IMR-90 (cell line): ENCODE measurements at regions of chr20 and their contacts with region 1.

Region 1: DNA sequence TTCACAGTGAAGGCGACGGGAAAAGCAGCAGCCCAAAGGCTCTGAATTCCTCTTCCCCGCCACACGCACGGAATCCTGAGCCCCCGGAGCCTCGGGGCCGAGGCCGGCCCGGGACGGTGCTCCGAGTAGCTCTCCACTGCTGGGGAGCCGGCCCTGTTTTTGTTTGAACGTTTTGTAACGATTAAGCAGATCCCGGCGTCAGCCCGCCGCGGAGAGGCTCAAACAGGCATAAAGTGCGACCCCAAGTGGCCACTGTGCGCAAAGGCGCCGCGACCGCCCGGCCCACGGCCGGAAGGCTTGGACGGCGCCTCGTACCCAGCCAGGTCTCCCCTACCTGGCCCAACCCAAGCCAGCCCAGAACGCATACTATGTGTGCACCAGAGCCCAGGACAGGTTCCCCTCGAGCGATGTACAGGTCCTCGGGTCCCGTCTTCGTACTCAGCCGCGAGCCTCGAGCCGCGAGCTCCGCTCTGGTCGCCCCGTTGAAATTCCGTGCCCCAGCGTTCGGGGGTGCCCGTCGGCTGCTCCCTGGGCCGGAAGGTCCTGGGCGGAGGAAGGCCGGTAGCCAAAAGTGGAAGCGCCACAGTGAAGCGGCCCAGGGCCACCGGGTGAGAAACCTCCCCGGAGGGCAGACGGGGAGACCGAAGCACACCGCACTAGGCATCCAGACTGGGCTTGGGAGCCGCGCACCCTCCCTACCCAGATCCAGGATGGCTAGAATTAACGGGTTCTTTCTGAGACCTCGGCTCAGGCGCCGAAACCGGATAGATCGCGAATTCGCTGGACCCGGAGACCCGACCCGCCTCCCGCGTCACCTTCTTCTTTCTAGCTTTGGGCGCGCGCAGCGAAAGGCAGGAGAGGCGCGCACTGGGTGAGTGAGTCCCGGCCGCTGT is 1.2 kb upstream of the MAFB start:
- DNase-seq: peak; percentile 79
- ATAC-seq: peak; percentile 63
- H3K4me3 ChIP-seq: peak overlapping the region; percentile 46
- H3K27ac ChIP-seq: peak overlapping the region; percentile 36; the same call in 1 of the 2 replicates
- H3K4me1 ChIP-seq: peaks cover 7% of the 10 kb centered on the region; the same call in 1 of the 2 replicates
- H3K27me3 ChIP-seq: peaks cover 75% of the 10 kb centered on the region
- CTCF ChIP-seq: peak; percentile 83
- POLR2A ChIP-seq: no peak
- RAD21 ChIP-seq: peak; percentile 79

Region 2: GRCh38 chr20:39112178-39112743 is 1577.9 kb before region 1 on chr20:
- CTCF ChIA-PET with region 1: no interaction called
- POLR2A ChIA-PET with region 1: no interaction called
- dilution Hi-C with region 1: no loop called
- in situ Hi-C with region 1: no loop called
- intact Hi-C with region 1: loop called (anchors 10 kb)
- DNase-seq: peak; percentile 28
- ATAC-seq: peak; percentile 96
- H3K4me3 ChIP-seq: no peak overlapping the region
- H3K27ac ChIP-seq: no peak overlapping the region
- H3K4me1 ChIP-seq: no peaks in the 10 kb centered on the region
- H3K27me3 ChIP-seq: peaks cover 8% of the 10 kb centered on the region
- CTCF ChIP-seq: peak; percentile 52
- POLR2A ChIP-seq: no peak
- RAD21 ChIP-seq: peak; percentile 62

Region 3: DNA sequence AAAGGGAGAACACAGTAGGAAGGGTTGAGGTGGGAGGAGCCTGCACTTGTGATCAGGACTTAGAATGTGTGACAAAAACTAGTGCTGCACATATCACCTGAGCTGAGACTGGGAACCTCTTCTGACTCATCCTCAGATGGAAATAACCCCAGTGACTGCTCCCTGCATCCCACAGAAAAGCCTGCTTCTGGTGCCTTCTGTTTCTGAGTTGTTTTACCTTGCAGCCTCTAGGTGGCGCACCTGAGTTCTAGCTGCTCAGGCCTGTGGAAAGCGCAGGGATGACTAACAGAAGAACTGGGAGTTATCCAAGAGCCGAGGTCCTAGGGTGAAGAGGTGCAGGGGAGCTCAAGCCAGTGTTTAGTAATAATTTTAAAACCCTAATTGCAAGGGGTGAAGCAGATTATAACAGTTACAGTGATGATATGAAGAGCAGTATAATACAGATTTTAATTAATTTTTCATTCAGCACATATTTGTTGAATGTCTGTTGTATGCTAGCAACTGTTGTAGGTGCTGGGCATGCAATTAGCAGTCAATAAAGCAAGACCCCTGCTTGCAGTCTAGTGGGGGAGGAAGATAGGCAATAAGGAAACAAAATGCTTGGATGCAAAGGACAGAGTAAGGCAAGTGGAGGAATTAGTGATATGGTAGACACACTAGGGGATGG is 1425.5 kb before region 1 on chr20:
- CTCF ChIA-PET with region 1: interaction called, 4 read pairs
- POLR2A ChIA-PET with region 1: no interaction called
- dilution Hi-C with region 1: no loop called
- in situ Hi-C with region 1: no loop called
- intact Hi-C with region 1: loop called (anchors 1 kb)
- DNase-seq: peak; percentile 71
- ATAC-seq: peak; percentile 80
- H3K4me3 ChIP-seq: no peak overlapping the region
- H3K27ac ChIP-seq: no peak overlapping the region
- H3K4me1 ChIP-seq: no peaks in the 10 kb centered on the region
- H3K27me3 ChIP-seq: no peaks in the 10 kb centered on the region
- CTCF ChIP-seq: peak; percentile 68
- POLR2A ChIP-seq: no peak
- RAD21 ChIP-seq: peak; percentile 43; the same call in 1 of the 2 replicates

Region 4: GRCh38 chr20:39885975-39886649 is 804.1 kb before region 1 on chr20:
- CTCF ChIA-PET with region 1: no interaction called
- POLR2A ChIA-PET with region 1: no interaction called
- dilution Hi-C with region 1: no loop called
- in situ Hi-C with region 1: loop called (anchors 25 kb)
- intact Hi-C with region 1: no loop called
- DNase-seq: peak; percentile 88
- ATAC-seq: peak; percentile 90
- H3K4me3 ChIP-seq: no peak overlapping the region
- H3K27ac ChIP-seq: no peak overlapping the region
- H3K4me1 ChIP-seq: peaks cover 2% of the 10 kb centered on the region; the same call in 1 of the 2 replicates
- H3K27me3 ChIP-seq: peaks cover 1% of the 10 kb centered on the region; the same call in 1 of the 2 replicates
- CTCF ChIP-seq: peak; percentile 64
- POLR2A ChIP-seq: no peak
- RAD21 ChIP-seq: peak; percentile 68

Region 5: GRCh38 chr20:40160097-40160550 is 530.1 kb before region 1 on chr20:
- CTCF ChIA-PET with region 1: no interaction called
- POLR2A ChIA-PET with region 1: no interaction called
- dilution Hi-C with region 1: no loop called
- in situ Hi-C with region 1: no loop called
- intact Hi-C with region 1: loop called (anchors 2 kb)
- DNase-seq: peak; percentile 23
- ATAC-seq: peak; percentile 82
- H3K4me3 ChIP-seq: no peak overlapping the region
- H3K27ac ChIP-seq: no peak overlapping the region
- H3K4me1 ChIP-seq: no peaks in the 10 kb centered on the region
- H3K27me3 ChIP-seq: no peaks in the 10 kb centered on the region
- CTCF ChIP-seq: peak; percentile 49
- POLR2A ChIP-seq: no peak
- RAD21 ChIP-seq: peak; percentile 34; the same call in 1 of the 2 replicates

Region 6: DNA sequence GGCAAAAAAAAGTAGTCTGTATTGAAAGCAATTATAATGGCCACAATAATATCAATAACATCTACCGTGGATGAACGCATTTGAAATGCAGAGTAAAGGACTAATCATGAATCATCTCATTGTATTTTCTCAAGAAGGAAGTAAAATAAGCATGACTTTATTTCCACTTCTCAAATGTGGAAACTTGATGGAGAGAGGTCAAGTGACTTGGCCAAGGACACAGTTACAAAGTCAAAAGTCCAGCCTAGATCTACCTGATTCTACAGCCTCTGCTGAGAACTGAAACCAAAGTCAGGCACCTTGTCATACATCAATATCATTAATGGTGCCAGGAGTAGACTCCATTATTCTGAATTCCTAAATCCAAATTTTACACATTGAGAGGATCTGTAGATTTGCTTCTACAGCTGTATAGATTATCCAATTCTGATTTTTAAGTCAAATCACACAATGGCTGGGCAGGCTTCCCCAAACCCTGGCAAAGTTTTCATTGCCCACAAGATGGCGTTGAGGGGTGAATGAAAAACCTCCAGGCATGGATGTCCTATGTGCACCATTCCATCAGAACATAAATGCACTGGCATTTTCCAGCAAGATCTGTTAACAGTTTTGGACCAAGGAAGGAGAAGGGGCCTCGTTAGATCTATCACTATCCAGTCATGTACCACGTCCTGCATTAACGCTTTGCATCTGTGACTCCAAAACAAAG is 424.2 kb before region 1 on chr20:
- CTCF ChIA-PET with region 1: no interaction called
- POLR2A ChIA-PET with region 1: no interaction called
- dilution Hi-C with region 1: no loop called
- in situ Hi-C with region 1: no loop called
- intact Hi-C with region 1: loop called (anchors 1 kb)
- DNase-seq: no peak
- ATAC-seq: peak; percentile 62
- H3K4me3 ChIP-seq: no peak overlapping the region
- H3K27ac ChIP-seq: no peak overlapping the region
- H3K4me1 ChIP-seq: no peaks in the 10 kb centered on the region
- H3K27me3 ChIP-seq: no peaks in the 10 kb centered on the region
- CTCF ChIP-seq: peak; percentile 15; the same call in 1 of the 2 replicates
- POLR2A ChIP-seq: no peak
- RAD21 ChIP-seq: no peak

Region 7: GRCh38 chr20:40945754-40946450 is 255.7 kb after region 1 on chr20:
- CTCF ChIA-PET with region 1: no interaction called
- POLR2A ChIA-PET with region 1: no interaction called
- dilution Hi-C with region 1: no loop called
- in situ Hi-C with region 1: no loop called
- intact Hi-C with region 1: loop called (anchors 5 kb)
- DNase-seq: peak; percentile 52
- ATAC-seq: peak; percentile 97
- H3K4me3 ChIP-seq: no peak overlapping the region
- H3K27ac ChIP-seq: no peak overlapping the region
- H3K4me1 ChIP-seq: peaks cover 1% of the 10 kb centered on the region; the same call in 1 of the 2 replicates
- H3K27me3 ChIP-seq: no peaks in the 10 kb centered on the region
- CTCF ChIP-seq: peak; percentile 59
- POLR2A ChIP-seq: no peak
- RAD21 ChIP-seq: peak; percentile 64